ENCODE measurements at regions of chr15 and their contacts with region 1.

Region 1: GRCh38 chr15:101006934-101007691 is 88.0 kb downstream of the LRRK1 start:
- DNase-seq: peak; percentile 25 to 88
- H3K4me3 ChIP-seq: peak overlapping the region; percentile 40 to 65
- H3K27ac ChIP-seq: peak overlapping the region; percentile 7 to 51
- H3K4me1 ChIP-seq: peaks cover 3 to 5% of the 10 kb centered on the region in 2 donors
- H3K27me3 ChIP-seq: no peaks in the 10 kb centered on the region
- CTCF ChIP-seq: peak; percentile 71 to 92 (median 80)

Region 2: GRCh38 chr15:100627789-100628395 is 379.2 kb before region 1 on chr15:
- intact Hi-C with region 1: loop called (anchors 1 kb)
- DNase-seq: peak in 1 of 2 donors; percentile 78
- H3K4me3 ChIP-seq: no peak overlapping the region
- H3K27ac ChIP-seq: no peak overlapping the region
- H3K4me1 ChIP-seq: no peaks in the 10 kb centered on the region
- H3K27me3 ChIP-seq: no peaks in the 10 kb centered on the region
- CTCF ChIP-seq: peak; percentile 65 to 79 (median 70)

Measured in ascending aorta (tissue), 2 donors.